ENCODE measurements at regions of chr4 and their contacts with region 1.

Region 1: DNA sequence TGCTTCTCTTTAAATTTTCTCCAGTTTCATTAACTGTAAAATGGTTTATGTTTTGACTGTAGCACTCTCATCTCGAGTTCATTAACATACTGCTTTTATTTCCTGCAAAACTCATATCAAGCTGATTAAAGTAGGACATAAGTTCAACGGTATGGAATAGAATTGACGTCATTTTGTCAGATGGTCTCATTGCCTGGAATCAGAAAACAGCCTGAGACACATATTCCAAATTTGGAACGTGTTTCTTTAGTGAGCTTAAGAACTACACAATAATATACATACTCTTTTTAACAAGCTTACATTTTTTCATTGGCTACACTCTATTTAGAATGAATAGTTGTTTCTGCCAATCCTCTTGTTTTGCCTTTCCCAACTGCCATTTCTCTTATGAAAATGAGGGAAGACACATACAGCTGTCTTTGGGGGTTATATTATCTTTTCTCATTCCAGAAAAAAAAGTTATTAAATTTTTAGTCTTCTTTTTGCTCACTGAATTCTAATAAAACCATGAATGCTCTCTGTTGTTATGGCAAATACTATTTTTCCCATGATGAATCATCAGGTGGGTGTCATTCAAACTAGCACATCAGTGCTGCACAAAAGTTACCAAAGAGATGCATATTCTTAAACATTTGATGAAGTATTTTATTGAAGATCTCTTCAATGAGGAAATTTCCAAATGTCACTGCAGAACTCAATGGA is 162.8 kb downstream of the GABRB1 start:
- DNase-seq: no peak
- H3K4me3 ChIP-seq: no peak overlapping the region
- H3K27ac ChIP-seq: no peak overlapping the region
- H3K4me1 ChIP-seq: peaks cover 2% of the 10 kb centered on the region
- H3K27me3 ChIP-seq: no peaks in the 10 kb centered on the region
- CTCF ChIP-seq: no peak

Region 2: DNA sequence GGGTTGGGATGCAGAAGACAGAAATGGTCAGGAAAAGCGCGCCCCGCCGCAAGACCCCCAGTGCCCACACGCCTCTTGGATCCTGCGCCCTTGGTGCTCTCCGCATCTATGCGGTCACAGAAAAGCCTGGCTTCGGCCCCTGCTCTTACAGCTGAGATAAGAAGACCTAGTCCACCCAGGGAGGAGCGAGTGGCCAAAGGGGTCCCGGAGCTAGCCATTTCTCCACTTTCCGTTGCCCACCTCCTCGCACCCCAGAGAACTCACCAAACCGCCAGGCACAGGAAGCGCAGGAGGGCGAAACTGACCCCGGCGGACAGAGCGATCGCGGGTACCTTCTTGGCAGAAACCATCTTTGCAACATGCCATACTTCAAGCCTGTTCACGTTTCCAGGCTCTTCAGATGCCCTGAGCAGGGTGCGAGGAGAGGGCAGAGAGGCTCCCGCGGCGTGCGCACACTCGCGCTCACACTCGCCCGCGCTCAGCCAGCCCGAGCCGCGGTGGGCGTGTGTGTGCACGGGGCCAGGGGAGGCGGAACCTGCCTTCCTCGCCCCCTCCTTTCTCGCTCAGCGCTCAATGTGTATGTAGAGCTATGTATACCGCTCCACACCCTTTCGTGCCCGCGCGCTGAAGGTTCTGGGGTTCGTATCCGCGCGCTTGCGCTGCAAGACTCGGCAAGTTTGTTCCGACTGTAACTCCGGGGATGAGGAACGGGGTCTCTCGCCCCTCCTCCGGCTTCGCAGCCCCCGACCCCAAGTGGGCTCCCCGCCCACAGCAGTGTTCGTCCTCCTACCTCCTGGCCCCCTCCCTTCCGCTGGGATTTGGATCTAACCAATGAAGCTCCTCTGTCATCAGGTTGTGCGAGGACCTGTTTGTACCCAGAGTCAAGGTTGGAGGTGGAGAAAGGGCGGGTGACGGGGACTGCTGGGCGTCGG is 200.8 kb before region 1 on chr4 and contains the start of gene GABRA4:
- CTCF ChIA-PET with region 1: no interaction called
- dilution Hi-C with region 1: no loop called
- in situ Hi-C with region 1: no loop called
- intact Hi-C with region 1: no loop called
- DNase-seq: peak; percentile 2
- H3K4me3 ChIP-seq: no peak within 1 kb of the TSS
- H3K27ac ChIP-seq: no peak within 1 kb of the TSS
- H3K4me1 ChIP-seq: peaks cover 6% of the 10 kb centered on the region
- H3K27me3 ChIP-seq: peaks cover 24% of the 10 kb centered on the region
- CTCF ChIP-seq: no peak
- total RNA-seq, gene GABRA4: not detected

Region 3: DNA sequence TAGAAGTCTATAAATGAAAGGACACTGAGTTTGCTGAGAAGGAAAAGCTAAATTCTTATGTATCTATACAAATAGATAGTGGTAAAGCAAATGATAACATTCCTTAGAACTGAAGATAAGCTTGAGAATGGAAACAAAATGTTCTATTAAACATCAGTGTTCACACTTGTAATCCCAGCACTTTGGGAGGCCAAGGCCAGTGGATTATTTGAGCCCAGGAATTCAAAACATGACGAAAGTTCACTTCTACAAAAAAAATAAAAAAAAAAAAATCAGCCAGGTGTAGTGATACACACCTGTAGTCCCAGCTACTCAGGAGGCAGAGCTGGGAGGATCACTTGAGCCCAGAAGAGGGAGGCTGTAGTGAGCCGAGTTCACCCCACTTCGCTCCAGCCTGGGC is 69.5 kb after region 1 on chr4:
- CTCF ChIA-PET with region 1: no interaction called
- dilution Hi-C with region 1: loop called (anchors 5 kb)
- in situ Hi-C with region 1: no loop called
- intact Hi-C with region 1: no loop called
- DNase-seq: no peak
- H3K4me3 ChIP-seq: no peak overlapping the region
- H3K27ac ChIP-seq: no peak overlapping the region
- H3K4me1 ChIP-seq: no peaks in the 10 kb centered on the region
- H3K27me3 ChIP-seq: no peaks in the 10 kb centered on the region
- CTCF ChIP-seq: no peak

Region 4: GRCh38 chr4:48093949-48094550 is 899.9 kb after region 1 on chr4:
- CTCF ChIA-PET with region 1: no interaction called
- dilution Hi-C with region 1: no loop called
- in situ Hi-C with region 1: no loop called
- intact Hi-C with region 1: no loop called
- DNase-seq: peak; percentile 93
- H3K4me3 ChIP-seq: no peak overlapping the region
- H3K27ac ChIP-seq: peak overlapping the region; percentile 58
- H3K4me1 ChIP-seq: peaks cover 16% of the 10 kb centered on the region
- H3K27me3 ChIP-seq: no peaks in the 10 kb centered on the region
- CTCF ChIP-seq: no peak